AG04449 (cell line): ENCODE measurements at regions of chr22 and their contacts with region 1.

Region 1: GRCh38 chr22:32810561-32811004 is 9.1 kb downstream of the TIMP3 start:
- DNase-seq: no peak
- H3K4me3 ChIP-seq: no peak overlapping the region
- CTCF ChIP-seq: no peak

Region 2: GRCh38 chr22:32648486-32648885 is 162.1 kb before region 1 on chr22:
- CTCF ChIA-PET with region 1: no interaction called
- POLR2A ChIA-PET with region 1: no interaction called
- DNase-seq: no peak
- H3K4me3 ChIP-seq: no peak overlapping the region
- CTCF ChIP-seq: no peak

Region 3: DNA sequence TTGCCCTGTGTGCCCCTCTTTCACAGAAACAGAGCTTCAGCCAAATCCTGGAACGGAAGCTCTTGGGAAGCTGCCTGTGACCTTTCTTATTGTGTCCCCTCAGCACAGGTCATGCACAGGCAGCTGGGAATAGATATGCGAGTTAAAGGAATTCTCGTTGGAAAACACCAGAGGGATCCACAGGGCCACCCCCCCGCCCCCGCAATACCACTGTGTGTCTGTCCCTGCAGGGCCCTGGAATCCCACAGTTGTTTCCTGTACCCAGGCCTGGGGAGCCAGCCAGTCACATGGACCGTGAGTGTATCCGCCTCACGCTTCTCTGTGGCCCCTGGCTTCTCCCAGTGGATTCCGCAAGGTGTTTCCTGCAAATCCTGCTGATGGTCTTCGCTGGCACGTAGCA is 19.9 kb after region 1 on chr22:
- CTCF ChIA-PET with region 1: interaction called, 14 read pairs
- POLR2A ChIA-PET with region 1: no interaction called
- DNase-seq: no peak
- H3K4me3 ChIP-seq: no peak overlapping the region
- CTCF ChIP-seq: no peak